ENCODE measurements at regions of chr9 and their contacts with region 1.

Region 1: GRCh38 chr9:93453047-93453914 is at the start of gene FAM120AOS:
- DNase-seq: peak; percentile 84 to 90 (median 85)
- H3K4me3 ChIP-seq: peak within 1 kb of the TSS; percentile 89
- H3K27ac ChIP-seq: peak within 1 kb of the TSS; percentile 71 to 86
- H3K4me1 ChIP-seq: peaks cover 8% of the 10 kb centered on the region
- H3K27me3 ChIP-seq: no peaks in the 10 kb centered on the region
- CTCF ChIP-seq: no peak
- EP300 ChIP-seq: no peak
- POLR2A ChIP-seq: peak; percentile 48
- total RNA-seq, gene FAM120AOS: 38.3 to 49.0 (median 40.3) TPM

Region 2: GRCh38 chr9:93134015-93134739 is 319.1 kb before region 1 on chr9 and contains the start of gene NINJ1:
- intact Hi-C with region 1: loop called in 1 of 4 experiments (anchors 10 kb)
- DNase-seq: peak; percentile 73 to 87 (median 82)
- H3K4me3 ChIP-seq: peak within 1 kb of the TSS; percentile 76
- H3K27ac ChIP-seq: peak within 1 kb of the TSS; percentile 70 to 96
- H3K4me1 ChIP-seq: peaks cover 31% of the 10 kb centered on the region
- H3K27me3 ChIP-seq: no peaks in the 10 kb centered on the region
- CTCF ChIP-seq: peak in 1 of 3 donors; percentile 4
- EP300 ChIP-seq: no peak
- POLR2A ChIP-seq: peak; percentile 78
- total RNA-seq, gene NINJ1: 35.2 to 75.2 (median 40.6) TPM

Region 3: GRCh38 chr9:93517331-93517730 is 64.0 kb after region 1 on chr9:
- intact Hi-C with region 1: loop called in 1 of 4 experiments (anchors 10 kb)
- DNase-seq: no peak
- H3K4me3 ChIP-seq: no peak overlapping the region
- H3K27ac ChIP-seq: no peak overlapping the region
- H3K4me1 ChIP-seq: peaks cover 16% of the 10 kb centered on the region
- H3K27me3 ChIP-seq: no peaks in the 10 kb centered on the region
- CTCF ChIP-seq: no peak
- EP300 ChIP-seq: no peak
- POLR2A ChIP-seq: no peak

Region 4: GRCh38 chr9:93566408-93567270 is 113.4 kb after region 1 on chr9:
- intact Hi-C with region 1: loop called in 3 of 4 experiments (anchors 2 to 10 kb)
- DNase-seq: peak; percentile 98 to 99 (median 99)
- H3K4me3 ChIP-seq: peak overlapping the region; percentile 73
- H3K27ac ChIP-seq: peak overlapping the region; percentile 62 to 90
- H3K4me1 ChIP-seq: peaks cover 7% of the 10 kb centered on the region
- H3K27me3 ChIP-seq: no peaks in the 10 kb centered on the region
- CTCF ChIP-seq: peak; percentile 91 to 95 (median 93)
- EP300 ChIP-seq: no peak
- POLR2A ChIP-seq: peak; percentile 90

Measured in ovary (tissue), 10 donors.